WTC11 (cell line): ENCODE measurements at regions of chr1 and their contacts with region 1.

Region 1: GRCh38 chr1:9004700-9005394 is 21.4 kb downstream of the SLC2A7 start:
- DNase-seq: peak; percentile 91
- ATAC-seq: peak; percentile 66
- H3K4me3 Mint-ChIP-seq: no peak overlapping the region
- H3K27ac Mint-ChIP-seq: no peak overlapping the region
- H3K4me1 Mint-ChIP-seq: peaks cover 9% of the 10 kb centered on the region
- H3K27me3 Mint-ChIP-seq: no peaks in the 10 kb centered on the region
- CTCF ChIP-seq: peak; percentile 96

Region 2: DNA sequence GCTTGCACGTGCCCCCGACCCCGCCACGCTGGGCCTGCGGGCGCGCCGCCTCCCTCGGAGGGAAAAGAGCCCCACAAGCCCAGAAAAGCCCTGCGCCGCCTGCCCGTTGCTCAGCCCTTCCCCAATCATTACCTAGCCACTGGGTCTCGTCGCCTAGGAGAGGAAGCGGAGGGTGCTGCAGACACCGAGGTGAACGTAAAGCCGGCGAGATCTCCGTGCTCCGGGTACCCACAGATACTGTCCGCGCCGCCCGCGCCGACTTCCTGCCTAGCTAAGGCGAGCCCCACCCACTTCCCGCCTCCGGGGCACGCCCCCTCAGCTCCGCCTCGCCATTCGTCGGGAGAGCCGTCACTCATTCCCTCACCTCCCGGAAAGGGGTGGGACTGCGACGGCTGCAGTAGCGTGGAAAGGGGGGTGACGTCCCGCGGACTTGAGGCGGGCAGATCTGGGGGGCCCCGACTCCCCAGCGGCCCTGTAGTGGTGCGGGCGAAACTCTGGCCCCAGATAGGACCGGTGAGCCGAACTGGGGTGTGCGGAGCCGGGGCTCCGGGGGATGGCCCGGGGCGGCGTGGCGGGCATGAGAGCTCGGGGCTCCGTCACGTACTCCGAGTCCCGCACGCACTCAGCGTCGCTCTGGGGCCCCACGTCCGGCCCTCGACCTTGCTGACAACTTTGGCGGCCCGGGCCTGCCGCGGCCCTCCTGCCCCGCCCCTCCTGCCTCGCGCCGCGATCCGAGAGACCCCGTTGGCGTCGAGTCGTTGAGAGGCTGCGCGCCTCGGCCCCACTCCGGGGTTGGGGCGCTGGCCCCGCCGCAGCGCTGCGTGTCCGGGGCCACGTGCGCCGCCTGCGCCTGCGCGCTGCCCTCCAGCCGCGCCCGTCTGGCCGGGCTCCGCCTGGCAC is 126.1 kb before region 1 on chr1 and contains the start of gene ENO1:
- CTCF ChIA-PET with region 1: interaction called, 32 read pairs
- POLR2A ChIA-PET with region 1: no interaction called
- DNase-seq: peak; percentile 96
- ATAC-seq: peak; percentile 79
- H3K4me3 Mint-ChIP-seq: peak within 1 kb of the TSS; percentile 92
- H3K27ac Mint-ChIP-seq: peak within 1 kb of the TSS; percentile 92
- H3K4me1 Mint-ChIP-seq: peaks cover 50% of the 10 kb centered on the region
- H3K27me3 Mint-ChIP-seq: peaks cover 14% of the 10 kb centered on the region
- CTCF ChIP-seq: no peak
- total RNA-seq, gene ENO1: 1,978 to 2,328 TPM (median 2,316 TPM) in 3 replicates

Region 3: DNA sequence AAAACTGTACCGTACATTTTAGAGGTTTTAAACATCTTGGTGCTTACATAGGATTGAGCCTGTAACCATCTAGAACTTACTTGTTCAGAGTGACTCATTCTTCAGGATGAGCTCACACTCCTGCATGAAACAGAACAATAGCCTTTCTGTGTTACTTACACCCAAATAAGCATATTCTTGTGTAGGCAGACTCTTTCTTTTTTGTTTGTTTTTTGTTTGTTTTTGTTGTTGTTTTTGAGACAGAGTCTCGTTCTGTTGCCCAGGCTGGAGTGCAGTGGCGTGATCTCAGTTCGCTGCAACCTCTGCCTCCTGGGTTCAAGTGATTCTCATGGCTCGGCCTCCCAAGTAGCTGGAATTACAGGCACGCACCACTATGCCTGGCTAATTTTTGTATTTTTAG is 62.9 kb before region 1 on chr1:
- CTCF ChIA-PET with region 1: interaction called, 28 read pairs
- POLR2A ChIA-PET with region 1: interaction called, 3 read pairs
- DNase-seq: no peak
- ATAC-seq: no peak
- H3K4me3 Mint-ChIP-seq: no peak overlapping the region
- H3K27ac Mint-ChIP-seq: no peak overlapping the region
- H3K4me1 Mint-ChIP-seq: peaks cover 51% of the 10 kb centered on the region
- H3K27me3 Mint-ChIP-seq: no peaks in the 10 kb centered on the region
- CTCF ChIP-seq: no peak

Region 4: DNA sequence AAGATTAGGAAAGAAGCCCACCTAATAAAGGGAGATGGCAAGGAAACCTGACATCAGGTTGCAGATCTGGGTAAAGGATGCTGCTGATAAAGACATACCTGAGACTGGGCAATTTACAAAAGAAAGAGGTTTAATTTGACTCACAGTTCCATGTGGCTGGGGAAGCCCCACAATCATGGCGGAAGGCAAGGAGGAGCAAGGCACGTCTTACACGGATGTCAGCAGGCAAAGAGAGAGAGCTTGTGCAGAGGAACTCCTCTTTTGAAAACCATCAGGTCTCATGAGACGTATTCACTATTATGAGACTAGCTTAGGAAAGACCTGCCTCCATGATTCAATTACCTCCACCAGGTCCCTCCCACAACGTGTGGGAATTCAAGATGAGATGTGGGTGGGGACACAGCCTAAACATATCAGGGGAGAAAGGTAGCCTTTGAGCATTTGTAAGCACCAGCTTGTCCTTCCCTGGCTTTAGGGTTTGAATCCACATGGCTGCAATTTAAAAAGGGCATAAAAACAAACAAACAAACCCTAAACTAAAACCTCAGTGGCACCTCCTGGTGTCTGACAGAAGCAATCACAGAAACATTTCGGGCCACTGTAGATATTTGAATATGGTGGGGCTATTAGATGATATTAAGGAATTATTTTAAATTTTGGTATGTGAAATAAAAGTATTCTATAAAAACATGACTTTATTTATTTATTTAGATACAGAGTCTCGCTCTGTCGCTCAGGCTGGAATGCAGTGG is 11.7 kb before region 1 on chr1:
- CTCF ChIA-PET with region 1: interaction called, 50 read pairs
- POLR2A ChIA-PET with region 1: no interaction called
- DNase-seq: no peak
- ATAC-seq: no peak
- H3K4me3 Mint-ChIP-seq: no peak overlapping the region
- H3K27ac Mint-ChIP-seq: no peak overlapping the region
- H3K4me1 Mint-ChIP-seq: no peaks in the 10 kb centered on the region
- H3K27me3 Mint-ChIP-seq: no peaks in the 10 kb centered on the region
- CTCF ChIP-seq: no peak

Region 5: GRCh38 chr1:9101510-9102146 is 96.8 kb after region 1 on chr1:
- CTCF ChIA-PET with region 1: interaction called, 59 read pairs
- POLR2A ChIA-PET with region 1: interaction called, 7 read pairs
- DNase-seq: peak; percentile 68
- ATAC-seq: peak; percentile 96
- H3K4me3 Mint-ChIP-seq: no peak overlapping the region
- H3K27ac Mint-ChIP-seq: no peak overlapping the region
- H3K4me1 Mint-ChIP-seq: peaks cover 5% of the 10 kb centered on the region; the same call in 1 of the 2 replicates
- H3K27me3 Mint-ChIP-seq: no peaks in the 10 kb centered on the region; the same call in 1 of the 2 replicates
- CTCF ChIP-seq: peak; percentile 50; the same call in 1 of the 2 replicates

Region 6: DNA sequence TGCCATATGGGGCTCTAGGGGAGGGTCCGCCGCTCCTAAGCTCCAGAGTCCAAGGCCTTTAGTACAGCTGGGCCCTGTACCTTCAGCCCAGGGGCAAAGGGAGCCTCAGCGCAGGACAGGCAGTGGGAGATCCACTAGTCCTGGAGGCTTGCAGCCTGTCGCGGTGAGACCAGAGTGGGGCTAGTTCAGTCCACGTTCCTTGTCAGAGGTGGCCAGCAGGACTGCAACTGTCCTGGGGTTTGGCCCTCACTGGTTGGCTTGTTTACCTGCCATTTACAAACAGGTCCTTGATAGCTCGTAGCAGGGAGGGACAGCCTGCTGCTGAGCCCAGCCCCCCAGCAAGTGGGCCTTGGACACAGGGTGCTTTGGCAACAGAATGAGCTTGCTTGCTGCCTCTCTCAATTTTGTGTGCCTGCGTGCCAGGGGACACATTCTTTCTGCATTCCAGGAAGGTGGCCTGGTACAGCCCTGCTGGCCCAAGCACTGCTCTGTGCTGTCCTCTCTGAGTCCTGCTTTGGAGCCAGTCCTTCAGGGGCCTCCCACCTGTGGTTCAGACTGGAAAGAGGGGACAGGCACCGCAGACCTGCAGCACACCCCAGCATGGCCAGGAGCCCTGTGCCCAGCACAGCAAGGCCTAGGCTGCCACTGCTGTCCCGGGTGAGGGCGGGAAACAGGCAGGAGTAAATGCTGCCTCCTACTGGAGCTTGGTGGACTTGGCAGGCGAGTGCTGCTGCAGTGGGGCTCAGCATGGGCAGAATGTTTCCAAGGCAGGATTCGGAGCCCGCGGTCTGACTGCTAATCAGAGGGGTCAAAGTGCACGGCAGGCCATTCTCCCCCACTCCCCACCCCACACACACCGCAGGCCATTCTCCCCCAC is 244.9 kb after region 1 on chr1:
- CTCF ChIA-PET with region 1: interaction called, 10 read pairs
- POLR2A ChIA-PET with region 1: no interaction called
- DNase-seq: peak; percentile 80
- ATAC-seq: peak; percentile 80
- H3K4me3 Mint-ChIP-seq: no peak overlapping the region
- H3K27ac Mint-ChIP-seq: no peak overlapping the region
- H3K4me1 Mint-ChIP-seq: peaks cover 42% of the 10 kb centered on the region
- H3K27me3 Mint-ChIP-seq: no peaks in the 10 kb centered on the region
- CTCF ChIP-seq: peak; percentile 72